WTC11 (cell line): ENCODE measurements at regions of chr14 and their contacts with region 1.

Region 1: DNA sequence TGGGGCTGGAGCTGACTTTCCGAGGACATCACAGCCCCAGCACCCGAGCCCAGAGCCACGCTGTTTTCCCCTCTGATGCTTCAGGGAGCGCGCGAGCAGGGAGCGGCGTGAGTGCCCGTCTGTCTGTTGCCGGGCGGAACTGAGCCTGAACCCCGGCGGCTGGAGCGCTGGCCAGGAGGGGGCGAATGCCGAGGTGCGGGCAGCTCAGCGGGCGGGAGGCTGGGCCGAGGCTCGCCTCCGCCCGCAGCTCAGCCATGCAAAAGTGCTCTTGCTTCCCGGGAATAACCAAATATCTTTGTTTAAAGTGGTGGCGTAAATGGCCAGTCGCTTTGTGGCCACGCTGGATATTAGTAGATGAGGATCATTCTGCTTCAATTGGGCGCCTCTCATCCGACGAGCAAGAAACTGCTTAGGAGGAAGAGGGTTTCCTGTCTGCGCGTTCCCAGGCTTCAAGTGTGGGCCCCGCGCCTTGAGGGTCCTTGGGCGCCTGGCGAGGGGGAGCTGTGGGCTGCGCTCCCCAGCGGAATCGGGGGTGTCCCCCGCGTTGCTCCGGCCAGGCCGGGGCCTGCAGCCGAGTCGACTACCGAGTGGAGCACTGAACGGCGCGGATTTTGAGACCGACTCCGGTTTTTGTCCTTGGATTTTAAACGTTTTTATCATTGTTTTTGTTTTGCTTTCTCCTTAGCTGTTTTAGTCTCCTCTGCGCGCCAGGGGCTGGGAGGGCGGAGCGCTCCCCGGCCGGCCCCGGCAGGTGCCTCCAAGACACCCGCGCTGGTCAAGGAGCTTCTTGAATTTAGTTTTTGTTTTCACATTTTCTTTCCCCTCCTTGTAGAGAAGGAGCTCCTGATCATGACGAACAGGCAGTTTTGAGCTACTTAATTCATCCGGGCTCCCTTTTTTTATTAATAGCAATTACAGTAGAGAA is 831 bp upstream of the NKX2-1 start:
- DNase-seq: peak; percentile 73
- ATAC-seq: peak; percentile 7
- H3K4me3 Mint-ChIP-seq: peak overlapping the region; percentile 59
- H3K27ac Mint-ChIP-seq: no peak overlapping the region
- H3K4me1 Mint-ChIP-seq: peaks cover 34% of the 10 kb centered on the region
- H3K27me3 Mint-ChIP-seq: peaks cover 98% of the 10 kb centered on the region
- CTCF ChIP-seq: no peak

Region 2: GRCh38 chr14:36373982-36374673 is 146.7 kb before region 1 on chr14:
- CTCF ChIA-PET with region 1: interaction called, 18 read pairs
- POLR2A ChIA-PET with region 1: no interaction called
- DNase-seq: peak; percentile 90
- ATAC-seq: peak; percentile 98
- H3K4me3 Mint-ChIP-seq: no peak overlapping the region
- H3K27ac Mint-ChIP-seq: no peak overlapping the region
- H3K4me1 Mint-ChIP-seq: no peaks in the 10 kb centered on the region
- H3K27me3 Mint-ChIP-seq: peaks cover 19% of the 10 kb centered on the region
- CTCF ChIP-seq: peak; percentile 86

Region 3: GRCh38 chr14:36451301-36452065 is 69.4 kb before region 1 on chr14:
- CTCF ChIA-PET with region 1: interaction called, 69 read pairs
- POLR2A ChIA-PET with region 1: no interaction called
- DNase-seq: no peak
- ATAC-seq: no peak; the same call in 1 of the 2 replicates
- H3K4me3 Mint-ChIP-seq: no peak overlapping the region
- H3K27ac Mint-ChIP-seq: no peak overlapping the region
- H3K4me1 Mint-ChIP-seq: peaks cover 11% of the 10 kb centered on the region
- H3K27me3 Mint-ChIP-seq: peaks cover 63% of the 10 kb centered on the region
- CTCF ChIP-seq: no peak

Region 4: GRCh38 chr14:36538051-36538450 is 17.2 kb after region 1 on chr14:
- CTCF ChIA-PET with region 1: interaction called, 36 read pairs
- POLR2A ChIA-PET with region 1: interaction called, 4 read pairs
- DNase-seq: no peak
- ATAC-seq: no peak
- H3K4me3 Mint-ChIP-seq: no peak overlapping the region
- H3K27ac Mint-ChIP-seq: no peak overlapping the region
- H3K4me1 Mint-ChIP-seq: no peaks in the 10 kb centered on the region
- H3K27me3 Mint-ChIP-seq: peaks cover 55% of the 10 kb centered on the region
- CTCF ChIP-seq: no peak

Region 5: GRCh38 chr14:36591482-36591881 is 70.6 kb after region 1 on chr14:
- CTCF ChIA-PET with region 1: interaction called, 30 read pairs
- POLR2A ChIA-PET with region 1: no interaction called
- DNase-seq: no peak
- ATAC-seq: no peak
- H3K4me3 Mint-ChIP-seq: no peak overlapping the region
- H3K27ac Mint-ChIP-seq: no peak overlapping the region
- H3K4me1 Mint-ChIP-seq: peaks cover 8% of the 10 kb centered on the region
- H3K27me3 Mint-ChIP-seq: peaks cover 29% of the 10 kb centered on the region
- CTCF ChIP-seq: no peak

Region 6: GRCh38 chr14:36647824-36648753 is 127.2 kb after region 1 on chr14:
- CTCF ChIA-PET with region 1: interaction called, 70 read pairs
- POLR2A ChIA-PET with region 1: interaction called, 3 read pairs
- DNase-seq: peak; percentile 70
- ATAC-seq: peak; percentile 83
- H3K4me3 Mint-ChIP-seq: peak overlapping the region; percentile 69
- H3K27ac Mint-ChIP-seq: no peak overlapping the region
- H3K4me1 Mint-ChIP-seq: peaks cover 8% of the 10 kb centered on the region
- H3K27me3 Mint-ChIP-seq: peaks cover 100% of the 10 kb centered on the region
- CTCF ChIP-seq: no peak; the same call in 1 of the 2 replicates

Region 7: DNA sequence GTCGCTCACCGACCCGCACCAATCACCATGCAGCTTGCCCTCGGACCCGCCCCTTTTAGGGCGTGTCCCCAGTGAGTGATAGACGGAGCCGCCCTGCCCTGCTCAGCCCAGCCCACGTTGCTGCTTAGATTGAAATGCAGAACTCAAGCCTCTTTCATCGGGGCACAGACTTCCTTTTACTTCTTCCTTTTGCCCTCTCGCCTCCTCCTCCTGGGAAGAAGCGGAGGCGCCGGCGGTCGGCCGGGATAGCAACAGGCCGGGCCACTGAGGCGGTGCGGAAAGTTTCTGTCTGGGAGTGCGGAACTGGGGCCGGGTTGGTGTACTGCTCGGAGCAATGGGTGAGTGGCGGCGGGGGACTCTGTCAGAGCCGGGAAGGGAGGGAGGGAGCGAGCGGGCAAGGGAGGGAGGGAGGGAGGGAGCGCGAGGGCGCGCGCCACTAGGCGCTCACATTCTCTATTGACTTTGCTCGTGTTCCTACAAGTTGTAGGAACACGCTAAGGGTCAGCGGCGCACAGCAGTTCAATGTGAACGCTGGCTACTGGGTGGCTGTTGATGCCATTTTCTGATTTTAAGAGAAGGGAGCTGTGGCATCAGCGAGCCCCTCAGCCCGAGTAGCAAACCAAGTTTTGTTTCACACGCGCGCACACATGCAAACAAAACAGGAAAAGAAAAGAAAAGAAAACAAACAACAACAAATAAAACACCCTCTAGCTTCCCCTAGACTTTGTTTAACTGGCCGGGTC is 141.1 kb after region 1 on chr14 and contains the start of gene PAX9:
- CTCF ChIA-PET with region 1: interaction called, 44 read pairs
- POLR2A ChIA-PET with region 1: no interaction called
- DNase-seq: peak; percentile 96
- ATAC-seq: peak; percentile 81
- H3K4me3 Mint-ChIP-seq: peak within 1 kb of the TSS; percentile 76
- H3K27ac Mint-ChIP-seq: no peak within 1 kb of the TSS
- H3K4me1 Mint-ChIP-seq: peaks cover 51% of the 10 kb centered on the region
- H3K27me3 Mint-ChIP-seq: peaks cover 100% of the 10 kb centered on the region
- CTCF ChIP-seq: no peak
- total RNA-seq, gene PAX9: not detected in 3 replicates

Region 8: GRCh38 chr14:36797634-36798033 is 276.8 kb after region 1 on chr14:
- CTCF ChIA-PET with region 1: no interaction called
- POLR2A ChIA-PET with region 1: no interaction called
- DNase-seq: no peak
- ATAC-seq: no peak
- H3K4me3 Mint-ChIP-seq: no peak overlapping the region
- H3K27ac Mint-ChIP-seq: no peak overlapping the region
- H3K4me1 Mint-ChIP-seq: no peaks in the 10 kb centered on the region
- H3K27me3 Mint-ChIP-seq: no peaks in the 10 kb centered on the region
- CTCF ChIP-seq: no peak